Activated T-helper 2 cell treated with anti-CD3 and anti-CD28 coated beads, Interferon-gamma antibody, Interleukin-2, Interleukin-4, amounts not matched to agents 10 μg/mL and 5 μg/mL and 100 μg/mL, durations not matched to agents 14 hours and 24 hours and 36 hours (primary cell): ENCODE measurements at regions of chrX and their contacts with region 1.

Region 1: GRCh38 chrX:20171887-20172286 is 30.2 kb upstream of the EIF1AX start:
- DNase-seq: no peak
- H3K4me3 Mint-ChIP-seq: no peak overlapping the region
- H3K27ac Mint-ChIP-seq: no peak overlapping the region
- H3K4me1 Mint-ChIP-seq: no peaks in the 10 kb centered on the region
- H3K27me3 Mint-ChIP-seq: no peaks in the 10 kb centered on the region

Region 2: GRCh38 chrX:20159797-20160385 is 12.0 kb before region 1 on chrX:
- intact Hi-C with region 1: loop called (anchors 1 kb)
- DNase-seq: no peak
- H3K4me3 Mint-ChIP-seq: no peak overlapping the region
- H3K27ac Mint-ChIP-seq: no peak overlapping the region
- H3K4me1 Mint-ChIP-seq: no peaks in the 10 kb centered on the region
- H3K27me3 Mint-ChIP-seq: no peaks in the 10 kb centered on the region

Region 3: GRCh38 chrX:20542072-20542471 is 370.2 kb after region 1 on chrX:
- intact Hi-C with region 1: no loop called
- DNase-seq: no peak
- H3K4me3 Mint-ChIP-seq: no peak overlapping the region
- H3K27ac Mint-ChIP-seq: no peak overlapping the region
- H3K4me1 Mint-ChIP-seq: no peaks in the 10 kb centered on the region
- H3K27me3 Mint-ChIP-seq: peaks cover 2% of the 10 kb centered on the region